ENCODE measurements at regions of chr15 and their contacts with region 1.

Region 1: DNA sequence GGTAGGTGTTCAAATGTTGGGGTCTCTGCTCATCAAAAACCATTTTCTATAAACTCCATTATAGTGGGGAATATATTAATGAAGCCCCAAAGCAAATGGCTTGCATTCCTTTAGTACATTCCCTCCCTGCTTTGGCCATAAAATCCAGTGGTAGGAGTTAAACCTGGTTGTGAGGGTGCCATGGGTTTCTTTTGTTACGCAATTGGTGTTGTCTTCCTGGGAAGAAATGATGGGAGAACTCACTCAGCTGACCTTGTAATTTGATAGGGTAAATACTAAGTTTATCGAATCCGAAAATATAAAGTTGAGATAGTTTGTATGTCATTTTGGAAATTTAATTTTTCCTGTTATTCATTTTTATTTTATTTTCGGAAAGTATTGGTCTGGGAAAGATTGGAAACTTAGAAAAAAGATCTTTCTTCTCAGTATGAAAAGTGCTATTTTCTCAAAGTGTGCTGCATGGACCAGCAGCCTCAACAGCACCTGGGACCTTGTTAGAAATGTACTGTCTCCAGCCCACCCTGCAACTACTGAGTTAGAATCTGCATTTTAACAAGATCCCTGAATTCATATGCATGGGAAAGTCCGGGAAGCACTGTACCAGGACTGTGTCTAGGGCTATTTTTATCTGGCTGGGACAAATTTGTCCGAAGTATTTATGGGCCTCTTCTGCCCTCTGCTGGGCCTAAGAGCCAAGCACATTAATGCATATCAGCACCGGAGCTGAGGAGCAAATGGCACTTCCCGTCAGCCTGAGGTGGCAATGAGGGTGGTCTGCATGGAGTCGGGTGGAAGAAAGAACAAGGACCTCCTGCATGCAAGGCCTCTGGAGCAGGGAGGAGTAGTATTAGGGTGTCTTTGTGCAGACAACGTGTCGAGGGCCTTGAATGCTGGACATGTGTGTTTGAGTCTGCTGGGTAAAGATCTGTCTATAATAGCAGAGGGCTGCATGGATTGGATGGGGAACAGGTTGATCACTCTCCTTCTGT is 54.7 kb downstream of the FAM81A start:
- DNase-seq: peak; percentile 60
- ATAC-seq: peak; percentile 98
- H3K4me3 ChIP-seq: no peak overlapping the region
- H3K27ac ChIP-seq: no peak overlapping the region
- H3K4me1 ChIP-seq: peaks cover 0 to 6% of the 10 kb centered on the region in 2 experiments; a peak in 1 of 4 replicates
- H3K27me3 ChIP-seq: no peaks in the 10 kb centered on the region
- CTCF ChIP-seq: peak; percentile 77 to 89 (median 86)
- POLR2A ChIP-seq: no peak
- RAD21 ChIP-seq: peak; percentile 97

Region 2: GRCh38 chr15:58957101-58957973 is 535.3 kb before region 1 on chr15:
- CTCF ChIA-PET with region 1: no interaction called
- POLR2A ChIA-PET with region 1: no interaction called
- RAD21 ChIA-PET with region 1: no interaction called
- intact Hi-C with region 1: loop called (anchors 5 kb)
- DNase-seq: peak; percentile 81
- ATAC-seq: peak; percentile 96
- H3K4me3 ChIP-seq: no peak overlapping the region
- H3K27ac ChIP-seq: no peak overlapping the region
- H3K4me1 ChIP-seq: peaks cover 10 to 22% of the 10 kb centered on the region in 2 experiments
- H3K27me3 ChIP-seq: no peaks in the 10 kb centered on the region
- CTCF ChIP-seq: peak; percentile 79 to 90 (median 82)
- POLR2A ChIP-seq: no peak
- RAD21 ChIP-seq: peak; percentile 75

Region 3: DNA sequence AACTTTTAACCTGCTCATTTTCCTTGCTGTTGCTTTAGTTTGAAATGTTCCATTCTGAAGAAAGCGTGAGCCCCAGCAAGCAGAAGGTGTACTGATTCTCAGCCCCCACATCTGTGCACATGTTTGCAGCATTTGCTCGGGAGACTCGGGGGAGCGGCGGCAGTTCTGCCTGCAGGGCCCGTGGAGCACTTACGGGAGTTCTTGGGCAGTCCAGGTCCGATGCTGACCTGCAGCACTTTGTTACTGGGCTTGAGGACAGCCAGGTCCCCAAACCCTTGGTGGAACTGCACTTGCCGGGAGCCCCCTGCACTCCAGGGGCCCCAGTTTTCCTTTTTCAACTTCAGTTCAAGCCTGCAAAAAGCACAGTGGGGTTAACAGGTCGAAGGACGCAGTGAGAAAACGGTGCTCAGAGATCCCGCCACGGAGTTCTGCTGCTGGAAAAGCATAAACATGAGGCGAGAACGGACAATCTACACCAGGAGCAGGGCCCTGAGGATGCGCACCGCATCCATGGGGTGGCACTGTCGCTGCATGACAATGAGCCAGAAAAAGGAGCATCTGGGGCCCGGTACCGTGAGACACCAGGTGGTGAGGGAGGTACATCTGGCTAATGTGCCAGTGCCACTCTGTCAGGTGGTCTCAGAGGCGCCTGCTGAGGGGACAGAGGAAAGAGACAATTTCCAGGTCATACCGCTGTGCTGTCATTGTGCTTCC is 331.6 kb before region 1 on chr15:
- CTCF ChIA-PET with region 1: interaction called, 10 read pairs
- POLR2A ChIA-PET with region 1: no interaction called
- RAD21 ChIA-PET with region 1: interaction called in 1 of 2 experiments, 3 read pairs
- intact Hi-C with region 1: loop called (anchors 2 kb)
- DNase-seq: no peak
- ATAC-seq: peak; percentile 98
- H3K4me3 ChIP-seq: no peak overlapping the region
- H3K27ac ChIP-seq: no peak overlapping the region
- H3K4me1 ChIP-seq: peaks cover 8 to 9% of the 10 kb centered on the region in 2 experiments
- H3K27me3 ChIP-seq: no peaks in the 10 kb centered on the region
- CTCF ChIP-seq: peak; percentile 75 to 82 (median 76)
- POLR2A ChIP-seq: no peak
- RAD21 ChIP-seq: peak; percentile 74

Region 4: DNA sequence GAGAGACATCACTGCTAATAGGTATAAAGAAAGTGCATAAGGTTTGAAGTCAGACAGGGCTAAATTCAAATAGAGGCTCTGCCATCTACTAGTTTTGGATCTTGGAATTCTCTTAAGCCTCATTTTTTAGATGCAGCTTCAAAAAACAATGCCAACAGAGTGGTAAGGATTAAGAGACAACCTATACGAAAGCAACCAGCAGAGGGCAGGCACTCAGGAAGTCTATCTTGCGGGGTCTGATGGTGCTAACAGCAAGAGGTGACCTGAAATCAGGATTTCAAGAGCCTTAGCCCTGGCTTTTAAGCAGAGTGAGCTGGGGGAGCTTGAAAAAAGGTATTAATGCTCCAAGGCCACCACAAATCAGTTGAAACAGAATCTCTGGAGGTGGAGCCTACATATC is 245.3 kb before region 1 on chr15:
- CTCF ChIA-PET with region 1: interaction called, 9 read pairs
- POLR2A ChIA-PET with region 1: no interaction called
- RAD21 ChIA-PET with region 1: no interaction called
- intact Hi-C with region 1: loop called (anchors 1 kb)
- DNase-seq: no peak
- ATAC-seq: peak; percentile 94
- H3K4me3 ChIP-seq: no peak overlapping the region
- H3K27ac ChIP-seq: no peak overlapping the region
- H3K4me1 ChIP-seq: peaks cover 0 to 37% of the 10 kb centered on the region in 2 experiments; a peak in 2 of 4 replicates
- H3K27me3 ChIP-seq: no peaks in the 10 kb centered on the region
- CTCF ChIP-seq: peak; percentile 41 to 77 (median 70); a peak in 5 of 6 replicates
- POLR2A ChIP-seq: no peak
- RAD21 ChIP-seq: peak; percentile 71

Measured in HCT116 (cell line).